Activated naive CD4-positive, alpha-beta T cell treated with anti-CD3 and anti-CD28 coated beads for 36 hours (primary cell): ENCODE measurements at regions of chr3 and their contacts with region 1.

Region 1: GRCh38 chr3:31219131-31219843 is 313.4 kb upstream of the STT3B start:
- DNase-seq: no peak
- H3K4me3 Mint-ChIP-seq: no peak overlapping the region
- H3K27ac Mint-ChIP-seq: no peak overlapping the region
- H3K4me1 Mint-ChIP-seq: peaks cover 89% of the 10 kb centered on the region
- H3K27me3 Mint-ChIP-seq: no peaks in the 10 kb centered on the region

Region 2: GRCh38 chr3:32117324-32117723 is 898.0 kb after region 1 on chr3:
- CTCF ChIA-PET with region 1: no interaction called
- intact Hi-C with region 1: loop called (anchors 10 kb)
- DNase-seq: no peak
- H3K4me3 Mint-ChIP-seq: no peak overlapping the region
- H3K27ac Mint-ChIP-seq: no peak overlapping the region
- H3K4me1 Mint-ChIP-seq: peaks cover 61% of the 10 kb centered on the region
- H3K27me3 Mint-ChIP-seq: no peaks in the 10 kb centered on the region